ENCODE measurements at regions of chr16 and their contacts with region 1.

Region 1: DNA sequence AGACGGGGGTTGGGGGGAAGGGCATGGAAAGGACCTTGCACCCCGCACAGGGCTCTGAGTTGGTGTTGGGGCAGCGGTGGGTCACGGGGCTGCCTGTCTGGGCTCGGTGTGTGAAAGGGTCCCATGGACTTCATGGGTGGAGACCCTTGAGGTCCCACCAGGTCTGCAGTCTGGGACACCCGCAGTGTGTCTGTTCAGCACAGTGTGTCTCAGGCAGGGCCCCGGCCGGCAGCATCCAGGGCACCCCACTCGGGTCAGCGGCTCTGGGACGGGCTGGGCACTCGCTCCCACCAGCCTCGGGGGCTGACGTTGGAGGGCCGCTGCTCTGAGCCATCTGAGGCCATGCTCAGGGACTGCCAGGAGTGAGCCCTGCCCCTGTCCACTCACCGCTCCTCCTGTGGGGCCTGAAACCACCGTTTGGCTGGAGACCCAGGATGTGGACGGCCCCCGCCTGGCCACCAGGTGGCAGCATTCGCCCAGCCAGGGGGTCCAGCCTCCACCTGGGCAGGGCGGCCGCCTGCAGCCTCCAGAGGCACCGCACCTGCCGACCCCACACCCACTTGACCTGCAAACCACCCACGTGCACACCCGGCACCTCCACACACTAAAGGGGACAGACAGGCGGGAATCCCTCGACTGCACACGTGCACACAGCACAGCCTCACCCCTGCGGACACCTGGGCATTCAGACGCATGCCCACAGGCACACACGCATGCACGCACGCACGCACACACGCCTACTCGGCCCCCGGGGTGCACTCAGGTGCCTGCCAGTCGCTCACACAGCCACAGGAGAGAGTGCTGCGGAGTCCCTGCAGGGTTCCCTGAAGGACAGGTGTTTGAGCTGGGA is 10.1 kb upstream of the ZFPM1 start:
- DNase-seq: peak; percentile 45
- H3K4me3 ChIP-seq: no peak overlapping the region
- H3K27ac ChIP-seq: no peak overlapping the region
- H3K4me1 ChIP-seq: peaks cover 2% of the 10 kb centered on the region
- H3K27me3 ChIP-seq: no peaks in the 10 kb centered on the region
- CTCF ChIP-seq: peak; percentile 84 to 97
- POLR2A ChIP-seq: no peak

Region 2: GRCh38 chr16:88527186-88527936 is 84.4 kb after region 1 on chr16:
- CTCF ChIA-PET with region 1: interaction called, 18 read pairs
- POLR2A ChIA-PET with region 1: no interaction called
- dilution Hi-C with region 1: no loop called
- intact Hi-C with region 1: loop called (anchors 1 kb)
- DNase-seq: peak; percentile 45
- H3K4me3 ChIP-seq: no peak overlapping the region
- H3K27ac ChIP-seq: no peak overlapping the region
- H3K4me1 ChIP-seq: peaks cover 20% of the 10 kb centered on the region
- H3K27me3 ChIP-seq: no peaks in the 10 kb centered on the region
- CTCF ChIP-seq: peak; percentile 88 to 98
- POLR2A ChIP-seq: no peak

Region 3: DNA sequence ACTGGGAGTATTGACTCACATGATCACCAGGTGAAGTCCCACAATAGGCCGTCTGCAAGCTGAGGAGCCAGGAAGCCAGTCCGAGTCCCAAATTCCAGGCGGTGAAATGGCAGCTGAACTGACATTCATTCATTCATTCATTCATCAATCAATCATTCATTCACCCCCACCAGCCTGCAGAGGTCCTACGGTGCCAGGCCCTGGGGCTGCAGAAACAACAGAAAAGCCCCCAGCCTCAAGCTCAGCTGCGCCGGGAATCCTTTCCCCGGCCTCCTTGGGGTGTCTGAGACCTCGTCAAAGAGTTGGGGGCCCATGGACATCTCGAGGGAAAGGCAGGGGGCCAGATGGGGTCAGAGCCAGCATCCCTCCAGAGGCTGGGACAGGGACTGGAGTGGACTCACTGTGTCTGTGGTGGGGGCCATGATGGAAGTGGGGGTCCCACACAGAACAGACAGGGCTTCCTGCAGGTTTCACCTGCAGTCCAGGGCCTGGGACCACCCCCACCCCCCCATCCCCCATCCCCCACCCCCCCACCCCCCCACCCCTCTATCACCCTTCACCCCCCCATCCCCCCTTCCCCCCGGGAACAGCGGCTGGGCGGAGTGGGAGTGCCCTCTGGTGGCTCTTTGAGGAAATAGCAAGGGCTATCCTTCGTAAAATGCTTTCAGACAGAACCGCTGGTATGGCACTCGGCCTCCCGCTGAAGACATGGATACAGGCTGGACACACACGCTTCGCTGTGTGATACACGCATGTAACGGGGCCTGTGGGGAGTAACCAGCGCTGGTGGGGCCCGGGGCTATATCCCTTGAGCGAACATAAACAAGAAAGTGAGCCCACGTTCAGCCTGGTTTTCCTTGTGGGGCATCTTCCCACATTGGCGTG is 118.8 kb after region 1 on chr16:
- CTCF ChIA-PET with region 1: interaction called, 13 read pairs
- POLR2A ChIA-PET with region 1: no interaction called
- dilution Hi-C with region 1: no loop called
- intact Hi-C with region 1: loop called (anchors 1 kb)
- DNase-seq: peak; percentile 42
- H3K4me3 ChIP-seq: no peak overlapping the region
- H3K27ac ChIP-seq: no peak overlapping the region
- H3K4me1 ChIP-seq: no peaks in the 10 kb centered on the region
- H3K27me3 ChIP-seq: no peaks in the 10 kb centered on the region
- CTCF ChIP-seq: peak; percentile 2 to 77
- POLR2A ChIP-seq: no peak